ENCODE measurements at regions of chr2 and their contacts with region 1.

Region 1: GRCh38 chr2:99559075-99559662 is 69.4 kb upstream of the REV1 start:
- DNase-seq: peak; percentile 76 to 86 (median 85)
- ATAC-seq: peak; percentile 99
- H3K4me3 ChIP-seq: no peak overlapping the region
- H3K27ac ChIP-seq: no peak overlapping the region
- H3K4me1 ChIP-seq: peaks cover 0 to 3% of the 10 kb centered on the region in 2 experiments; a peak in 1 of 5 replicates
- H3K27me3 ChIP-seq: peaks cover 9 to 36% of the 10 kb centered on the region in 2 experiments; a peak in 4 of 5 replicates
- CTCF ChIP-seq: peak; percentile 94 to 96 (median 96)
- EP300 ChIP-seq: no peak
- POLR2A ChIP-seq: no peak
- RAD21 ChIP-seq: peak; percentile 99 to 100

Region 2: GRCh38 chr2:99615247-99615771 is 56.1 kb after region 1 on chr2:
- CTCF ChIA-PET with region 1: interaction called, 3 read pairs
- POLR2A ChIA-PET with region 1: no interaction called
- in situ Hi-C with region 1: no loop called
- intact Hi-C with region 1: loop called (anchors 1 kb)
- DNase-seq: peak in 2 of 4 experiments; percentile 28 to 62
- ATAC-seq: peak; percentile 84
- H3K4me3 ChIP-seq: no peak overlapping the region
- H3K27ac ChIP-seq: no peak overlapping the region
- H3K4me1 ChIP-seq: peaks cover 3 to 9% of the 10 kb centered on the region in 2 experiments; a peak in 4 of 5 replicates
- H3K27me3 ChIP-seq: peaks cover 0 to 7% of the 10 kb centered on the region in 2 experiments; a peak in 2 of 5 replicates
- CTCF ChIP-seq: peak; percentile 51 to 69 (median 56)
- EP300 ChIP-seq: no peak
- POLR2A ChIP-seq: no peak
- RAD21 ChIP-seq: peak in 1 of 2 experiments; percentile 70; a peak in 3 of 4 replicates

Region 3: GRCh38 chr2:99818842-99819241 is 259.7 kb after region 1 on chr2:
- CTCF ChIA-PET with region 1: interaction called, 3 read pairs
- POLR2A ChIA-PET with region 1: no interaction called
- in situ Hi-C with region 1: loop called (anchors 25 kb)
- intact Hi-C with region 1: loop called (anchors 1 kb)
- DNase-seq: no peak
- ATAC-seq: no peak
- H3K4me3 ChIP-seq: no peak overlapping the region
- H3K27ac ChIP-seq: no peak overlapping the region
- H3K4me1 ChIP-seq: no peaks in the 10 kb centered on the region
- H3K27me3 ChIP-seq: peaks cover 3 to 18% of the 10 kb centered on the region in 2 experiments; a peak in 4 of 5 replicates
- CTCF ChIP-seq: no peak
- EP300 ChIP-seq: no peak
- POLR2A ChIP-seq: no peak
- RAD21 ChIP-seq: peak in 1 of 2 experiments; percentile 29; a peak in 2 of 4 replicates

Region 4: GRCh38 chr2:100262555-100263320 is 703.6 kb after region 1 on chr2:
- CTCF ChIA-PET with region 1: interaction called, 4 read pairs
- POLR2A ChIA-PET with region 1: no interaction called
- in situ Hi-C with region 1: no loop called
- intact Hi-C with region 1: loop called (anchors 1 kb)
- DNase-seq: peak; percentile 76 to 82 (median 81)
- ATAC-seq: peak; percentile 89
- H3K4me3 ChIP-seq: no peak overlapping the region
- H3K27ac ChIP-seq: no peak overlapping the region
- H3K4me1 ChIP-seq: peaks cover 3 to 8% of the 10 kb centered on the region in 2 experiments; a peak in 3 of 5 replicates
- H3K27me3 ChIP-seq: peaks cover 6 to 19% of the 10 kb centered on the region in 2 experiments; a peak in 3 of 5 replicates
- CTCF ChIP-seq: peak; percentile 91 to 94 (median 94)
- EP300 ChIP-seq: no peak
- POLR2A ChIP-seq: no peak
- RAD21 ChIP-seq: peak; percentile 97 to 99

Measured in K562 (cell line).